K562 (cell line): ENCODE measurements at regions of chr6 and their contacts with region 1.

Region 1: GRCh38 chr6:39347906-39348585 is 25.5 kb upstream of the KCNK16 start:
- DNase-seq: peak; percentile 74 to 83 (median 80)
- ATAC-seq: peak; percentile 96
- H3K4me3 ChIP-seq: no peak overlapping the region
- H3K27ac ChIP-seq: no peak overlapping the region
- H3K4me1 ChIP-seq: no peaks in the 10 kb centered on the region
- H3K27me3 ChIP-seq: peaks cover 20 to 30% of the 10 kb centered on the region in 2 experiments; a peak in 4 of 5 replicates
- CTCF ChIP-seq: peak; percentile 83 to 96 (median 89)
- EP300 ChIP-seq: no peak
- POLR2A ChIP-seq: no peak
- RAD21 ChIP-seq: peak; percentile 65 to 84

Region 2: GRCh38 chr6:39892490-39893129 is 544.6 kb after region 1 on chr6:
- CTCF ChIA-PET with region 1: interaction called, 5 read pairs
- POLR2A ChIA-PET with region 1: no interaction called
- in situ Hi-C with region 1: no loop called
- intact Hi-C with region 1: loop called (anchors 5 kb)
- DNase-seq: peak; percentile 56 to 70 (median 62)
- ATAC-seq: peak; percentile 89
- H3K4me3 ChIP-seq: no peak overlapping the region
- H3K27ac ChIP-seq: no peak overlapping the region
- H3K4me1 ChIP-seq: no peaks in the 10 kb centered on the region
- H3K27me3 ChIP-seq: peaks cover 11 to 19% of the 10 kb centered on the region in 2 experiments; a peak in 4 of 5 replicates
- CTCF ChIP-seq: peak; percentile 57 to 76 (median 70)
- EP300 ChIP-seq: no peak
- POLR2A ChIP-seq: no peak
- RAD21 ChIP-seq: peak; percentile 53 to 73